A549 (cell line): ENCODE measurements at regions of chr20 and their contacts with region 1.

Region 1: DNA sequence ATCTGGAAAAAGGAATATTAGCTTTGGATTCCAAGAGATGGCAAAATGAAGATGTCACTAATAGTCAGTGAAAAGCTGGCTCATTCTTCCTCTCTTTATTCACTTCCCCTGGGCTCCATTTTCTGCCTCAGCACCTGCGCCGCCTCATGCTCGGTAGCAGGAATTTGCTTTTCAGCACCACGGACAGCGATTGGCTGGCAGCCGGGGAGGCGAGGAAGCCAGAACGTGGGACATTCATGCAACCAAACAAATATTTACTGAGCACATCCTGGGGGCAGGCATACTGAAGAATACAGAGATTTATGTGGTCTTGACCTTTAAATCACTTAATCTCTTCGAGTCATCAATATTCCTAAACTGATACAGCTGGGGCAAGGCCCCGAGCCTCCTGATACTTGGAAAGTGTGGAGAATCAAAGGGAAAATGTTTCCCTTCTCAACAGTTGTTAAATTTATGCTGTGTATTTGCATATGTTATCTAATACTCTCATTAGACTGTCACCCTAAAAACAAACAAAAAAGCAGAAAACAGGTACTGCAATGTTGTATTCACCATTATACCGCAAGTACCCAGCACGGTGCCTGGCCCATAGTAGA is 12.1 kb upstream of the PDYN start:
- DNase-seq: peak in 1 of 2 experiments; percentile 55
- ATAC-seq: peak in 1 of 2 experiments; percentile 65; a peak in 3 of 6 replicates
- H3K4me3 ChIP-seq: no peak overlapping the region
- H3K27ac ChIP-seq: no peak overlapping the region
- H3K4me1 ChIP-seq: no peaks in the 10 kb centered on the region
- CTCF ChIP-seq: no peak
- EP300 ChIP-seq: no peak
- POLR2A ChIP-seq: no peak
- RAD21 ChIP-seq: no peak

Region 2: GRCh38 chr20:1987826-1988225 is 18.1 kb before region 1 on chr20:
- CTCF ChIA-PET with region 1: interaction called, 45 read pairs
- POLR2A ChIA-PET with region 1: no interaction called
- DNase-seq: no peak
- ATAC-seq: peak in 1 of 2 experiments; percentile 51; a peak in 2 of 6 replicates
- H3K4me3 ChIP-seq: no peak overlapping the region
- H3K27ac ChIP-seq: no peak overlapping the region
- H3K4me1 ChIP-seq: no peaks in the 10 kb centered on the region
- CTCF ChIP-seq: no peak
- EP300 ChIP-seq: no peak
- POLR2A ChIP-seq: no peak
- RAD21 ChIP-seq: no peak

Region 3: GRCh38 chr20:2022163-2022562 is 16.2 kb after region 1 on chr20:
- CTCF ChIA-PET with region 1: interaction called, 61 read pairs
- POLR2A ChIA-PET with region 1: no interaction called
- DNase-seq: no peak
- ATAC-seq: no peak
- H3K4me3 ChIP-seq: no peak overlapping the region
- H3K27ac ChIP-seq: no peak overlapping the region
- H3K4me1 ChIP-seq: no peaks in the 10 kb centered on the region
- CTCF ChIP-seq: no peak
- EP300 ChIP-seq: no peak
- POLR2A ChIP-seq: no peak
- RAD21 ChIP-seq: no peak

Region 4: GRCh38 chr20:2042400-2042799 is 36.5 kb after region 1 on chr20:
- CTCF ChIA-PET with region 1: interaction called, 10 read pairs
- POLR2A ChIA-PET with region 1: no interaction called
- DNase-seq: no peak
- ATAC-seq: no peak
- H3K4me3 ChIP-seq: no peak overlapping the region
- H3K27ac ChIP-seq: no peak overlapping the region
- H3K4me1 ChIP-seq: no peaks in the 10 kb centered on the region
- CTCF ChIP-seq: no peak
- EP300 ChIP-seq: no peak
- POLR2A ChIP-seq: no peak
- RAD21 ChIP-seq: no peak

Region 5: GRCh38 chr20:2093159-2093781 is 87.3 kb after region 1 on chr20:
- CTCF ChIA-PET with region 1: interaction called, 17 read pairs
- POLR2A ChIA-PET with region 1: no interaction called
- DNase-seq: peak; percentile 59 to 60
- ATAC-seq: peak; percentile 66 to 85; a peak in 4 of 6 replicates
- H3K4me3 ChIP-seq: no peak overlapping the region
- H3K27ac ChIP-seq: no peak overlapping the region
- H3K4me1 ChIP-seq: no peaks in the 10 kb centered on the region
- CTCF ChIP-seq: peak; percentile 68
- EP300 ChIP-seq: no peak
- POLR2A ChIP-seq: no peak
- RAD21 ChIP-seq: peak; percentile 66 to 80